Natural killer cell (primary cell): ENCODE measurements at regions of chr9 and their contacts with region 1.

Region 1: GRCh38 chr9:33778700-33779351 is 16.5 kb upstream of the PRSS3 start:
- DNase-seq: peak; percentile 28 to 81
- ATAC-seq: peak; percentile 87 to 98 (median 96)
- H3K4me3 ChIP-seq: no peak overlapping the region
- H3K4me3 Mint-ChIP-seq: no peak overlapping the region
- H3K27ac ChIP-seq: no peak overlapping the region
- H3K27ac Mint-ChIP-seq: no peak overlapping the region
- H3K4me1 ChIP-seq: no peaks in the 10 kb centered on the region
- H3K4me1 Mint-ChIP-seq: peaks cover 5% of the 10 kb centered on the region in 2 donors
- H3K27me3 ChIP-seq: no peaks in the 10 kb centered on the region
- H3K27me3 Mint-ChIP-seq: peaks cover 11 to 13% of the 10 kb centered on the region in 2 donors
- CTCF ChIP-seq: peak; percentile 83

Region 2: DNA sequence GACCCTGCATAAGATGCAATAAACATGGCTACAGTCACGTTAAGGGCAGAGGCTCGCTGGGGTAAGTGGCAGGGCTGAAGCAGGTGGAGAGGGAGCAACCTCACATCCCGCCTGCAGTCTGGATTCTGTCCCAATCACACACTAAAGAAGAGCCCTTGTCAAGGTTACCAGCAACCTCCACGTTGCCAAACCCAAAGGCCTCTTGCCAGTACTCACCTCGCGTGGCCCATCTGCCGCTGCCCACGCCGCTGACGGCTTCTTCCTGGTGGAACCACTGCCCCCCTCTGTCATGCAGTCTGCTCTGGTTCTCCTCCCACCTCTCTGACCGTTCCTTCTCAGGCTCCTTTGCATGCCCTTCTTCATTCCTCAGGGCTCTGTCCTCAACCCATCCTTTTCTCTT is 385.2 kb before region 1 on chr9:
- intact Hi-C with region 1: no loop called
- DNase-seq: no peak
- ATAC-seq: no peak
- H3K4me3 ChIP-seq: no peak overlapping the region
- H3K4me3 Mint-ChIP-seq: no peak overlapping the region
- H3K27ac ChIP-seq: no peak overlapping the region
- H3K27ac Mint-ChIP-seq: no peak overlapping the region
- H3K4me1 ChIP-seq: no peaks in the 10 kb centered on the region
- H3K4me1 Mint-ChIP-seq: no peaks in the 10 kb centered on the region
- H3K27me3 ChIP-seq: no peaks in the 10 kb centered on the region
- H3K27me3 Mint-ChIP-seq: peaks cover 0 to 7% of the 10 kb centered on the region in 2 donors
- CTCF ChIP-seq: no peak

Region 3: GRCh38 chr9:33623658-33624586 is 154.9 kb before region 1 on chr9:
- intact Hi-C with region 1: loop called (anchors 1 kb)
- DNase-seq: peak; percentile 55 to 87
- ATAC-seq: peak; percentile 87 to 99 (median 93)
- H3K4me3 ChIP-seq: no peak overlapping the region
- H3K4me3 Mint-ChIP-seq: no peak overlapping the region
- H3K27ac ChIP-seq: no peak overlapping the region
- H3K27ac Mint-ChIP-seq: no peak overlapping the region
- H3K4me1 ChIP-seq: peaks cover 5% of the 10 kb centered on the region
- H3K4me1 Mint-ChIP-seq: peaks cover 5 to 7% of the 10 kb centered on the region in 2 donors
- H3K27me3 ChIP-seq: peaks cover 4% of the 10 kb centered on the region
- H3K27me3 Mint-ChIP-seq: peaks cover 10 to 48% of the 10 kb centered on the region in 2 donors
- CTCF ChIP-seq: peak; percentile 83

Region 4: DNA sequence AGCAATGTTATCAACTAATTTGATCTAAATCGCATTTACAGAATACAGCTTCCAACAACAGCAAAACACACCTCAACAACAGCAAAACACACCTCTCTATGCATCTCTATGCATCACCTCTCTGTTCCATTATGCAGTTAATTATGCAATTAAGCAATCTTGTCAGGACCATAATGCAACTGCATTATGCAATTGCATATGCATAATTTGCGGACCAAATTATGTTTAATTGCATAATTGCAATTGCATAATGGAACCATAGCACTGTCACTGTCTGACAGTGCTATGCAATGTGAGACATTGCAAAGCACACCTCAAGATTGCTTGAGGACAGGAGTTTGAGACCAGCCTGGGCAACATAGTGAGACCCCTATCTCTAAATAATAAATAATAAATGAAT is 63.8 kb before region 1 on chr9:
- intact Hi-C with region 1: no loop called
- DNase-seq: no peak
- ATAC-seq: peak in 1 of 3 donors; percentile 48
- H3K4me3 ChIP-seq: no peak overlapping the region
- H3K4me3 Mint-ChIP-seq: no peak overlapping the region
- H3K27ac ChIP-seq: no peak overlapping the region
- H3K27ac Mint-ChIP-seq: no peak overlapping the region
- H3K4me1 ChIP-seq: peaks cover 5% of the 10 kb centered on the region
- H3K4me1 Mint-ChIP-seq: peaks cover 0 to 5% of the 10 kb centered on the region in 2 donors
- H3K27me3 ChIP-seq: no peaks in the 10 kb centered on the region
- H3K27me3 Mint-ChIP-seq: peaks cover 4 to 6% of the 10 kb centered on the region in 2 donors
- CTCF ChIP-seq: no peak

Region 5: DNA sequence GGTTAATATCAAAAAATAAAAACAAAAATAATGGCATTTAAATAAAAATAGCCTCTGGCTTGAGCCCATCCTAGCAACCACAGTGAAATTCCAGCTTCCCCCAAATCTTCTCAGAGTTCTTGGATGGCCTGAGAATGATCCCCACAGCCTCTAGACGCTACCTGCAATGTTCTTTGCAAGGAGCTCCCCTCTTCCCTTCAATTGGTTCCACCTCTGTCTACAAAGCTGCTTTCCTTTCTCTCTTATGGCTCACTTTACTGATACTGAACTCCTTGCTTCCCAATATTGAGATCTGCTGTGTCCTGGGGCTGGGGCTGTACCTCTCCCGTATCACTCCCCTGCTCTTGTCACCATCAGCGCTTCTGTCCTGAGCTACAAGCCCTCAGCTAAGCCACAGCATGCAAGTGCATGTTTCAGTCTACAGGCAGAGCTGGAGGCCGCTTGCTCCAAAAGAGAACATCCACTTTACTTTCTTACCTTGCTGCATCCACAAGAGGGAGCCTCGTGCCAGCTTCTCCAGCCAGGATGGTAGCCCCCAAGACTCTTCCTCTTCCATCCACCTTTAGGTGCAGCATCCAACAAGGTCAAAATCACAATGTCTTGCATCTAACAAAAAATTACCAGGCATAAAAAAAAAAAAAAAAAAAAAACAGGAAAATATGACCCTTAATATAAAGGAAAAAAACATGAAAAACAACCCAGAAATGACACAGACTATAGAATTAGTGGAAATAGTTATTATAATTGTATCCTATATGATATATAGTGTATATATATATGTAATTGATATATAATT is 40.8 kb before region 1 on chr9:
- intact Hi-C with region 1: loop called (anchors 1 kb)
- DNase-seq: peak in 1 of 2 donors; percentile 45
- ATAC-seq: peak in 2 of 3 donors; percentile 52 to 55
- H3K4me3 ChIP-seq: no peak overlapping the region
- H3K4me3 Mint-ChIP-seq: no peak overlapping the region
- H3K27ac ChIP-seq: no peak overlapping the region
- H3K27ac Mint-ChIP-seq: no peak overlapping the region
- H3K4me1 ChIP-seq: no peaks in the 10 kb centered on the region
- H3K4me1 Mint-ChIP-seq: peaks cover 5% of the 10 kb centered on the region in 2 donors
- H3K27me3 ChIP-seq: no peaks in the 10 kb centered on the region
- H3K27me3 Mint-ChIP-seq: peaks cover 28 to 36% of the 10 kb centered on the region in 2 donors
- CTCF ChIP-seq: peak; percentile 61

Region 6: GRCh38 chr9:33867747-33868439 is 89.1 kb after region 1 on chr9:
- intact Hi-C with region 1: no loop called
- DNase-seq: no peak
- ATAC-seq: no peak
- H3K4me3 ChIP-seq: no peak overlapping the region
- H3K4me3 Mint-ChIP-seq: no peak overlapping the region
- H3K27ac ChIP-seq: no peak overlapping the region
- H3K27ac Mint-ChIP-seq: peak overlapping the region in 1 of 2 donors; percentile 18
- H3K4me1 ChIP-seq: peaks cover 6% of the 10 kb centered on the region
- H3K4me1 Mint-ChIP-seq: peaks cover 31 to 41% of the 10 kb centered on the region in 2 donors
- H3K27me3 ChIP-seq: no peaks in the 10 kb centered on the region
- H3K27me3 Mint-ChIP-seq: no peaks in the 10 kb centered on the region
- CTCF ChIP-seq: no peak